A549 (cell line): ENCODE measurements at regions of chr6 and their contacts with region 1.

Region 1: GRCh38 chr6:99241905-99242534 is 107.5 kb downstream of the FAXC start:
- DNase-seq: peak in 1 of 2 experiments; percentile 40
- ATAC-seq: peak; percentile 59 to 68; a peak in 4 of 6 replicates
- H3K4me3 ChIP-seq: no peak overlapping the region
- H3K27ac ChIP-seq: no peak overlapping the region
- H3K4me1 ChIP-seq: no peaks in the 10 kb centered on the region
- CTCF ChIP-seq: peak; percentile 44
- EP300 ChIP-seq: no peak
- POLR2A ChIP-seq: no peak
- RAD21 ChIP-seq: peak; percentile 41 to 43; a peak in 2 of 5 replicates

Region 2: DNA sequence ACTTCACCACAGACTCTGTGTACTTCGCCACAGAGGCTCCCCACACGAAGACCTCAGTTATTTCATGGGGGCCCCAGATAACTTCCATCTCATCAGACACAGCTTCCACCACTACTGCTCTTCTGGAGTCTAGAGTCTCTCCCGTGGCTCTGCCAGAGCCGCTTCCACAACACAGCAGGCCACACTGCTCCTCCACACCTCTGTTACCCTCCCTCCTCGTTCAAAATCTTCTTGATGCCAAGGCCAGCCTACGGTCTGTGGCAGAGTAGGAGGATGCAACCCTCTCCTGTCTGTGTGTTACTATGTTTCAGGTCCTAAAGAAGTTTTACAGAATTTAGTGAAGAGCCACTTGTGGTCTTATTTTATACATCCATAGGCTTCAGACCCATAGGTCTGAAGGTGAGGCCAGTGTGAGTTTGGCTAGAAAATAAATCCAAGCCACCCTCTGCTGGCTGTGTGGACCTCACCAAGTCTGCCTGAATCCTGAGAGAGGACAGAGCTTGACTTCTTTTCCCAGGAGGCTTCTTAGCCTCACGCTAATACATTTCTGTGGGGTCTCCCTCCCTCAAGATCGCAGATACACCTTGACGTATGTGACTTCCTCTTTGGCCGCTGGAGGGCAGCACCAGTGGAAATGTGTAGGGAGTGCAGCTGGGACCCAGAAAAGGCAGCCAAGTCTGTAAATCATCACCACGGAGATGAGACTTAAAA is 90.2 kb before region 1 on chr6:
- CTCF ChIA-PET with region 1: interaction called, 13 read pairs
- POLR2A ChIA-PET with region 1: no interaction called
- DNase-seq: peak; percentile 6 to 40
- ATAC-seq: peak; percentile 78 to 96
- H3K4me3 ChIP-seq: no peak overlapping the region
- H3K27ac ChIP-seq: no peak overlapping the region
- H3K4me1 ChIP-seq: no peaks in the 10 kb centered on the region
- CTCF ChIP-seq: peak; percentile 48
- EP300 ChIP-seq: no peak
- POLR2A ChIP-seq: no peak
- RAD21 ChIP-seq: peak; percentile 17 to 27; a peak in 2 of 5 replicates